ENCODE measurements at regions of chr4 and their contacts with region 1.

Region 1: GRCh38 chr4:47463235-47463956 is at the start of gene COMMD8:
- DNase-seq: peak; percentile 89 to 98 (median 96)
- ATAC-seq: peak; percentile 93 to 95 (median 94)
- H3K4me3 ChIP-seq: peak within 1 kb of the TSS; percentile 84 to 90
- H3K4me3 Mint-ChIP-seq: peak within 1 kb of the TSS; percentile 82 to 86 (median 84)
- H3K27ac ChIP-seq: peak within 1 kb of the TSS; percentile 83
- H3K27ac Mint-ChIP-seq: peak within 1 kb of the TSS; percentile 82 to 87
- H3K4me1 ChIP-seq: peaks cover 5 to 11% of the 10 kb centered on the region in 2 experiments
- H3K4me1 Mint-ChIP-seq: peaks cover 26 to 39% (median 39%) of the 10 kb centered on the region in 3 donors
- H3K27me3 ChIP-seq: no peaks in the 10 kb centered on the region
- H3K27me3 Mint-ChIP-seq: no peaks in the 10 kb centered on the region
- total RNA-seq, gene COMMD8: 8.2 to 17.0 (median 15.7) TPM

Region 2: GRCh38 chr4:47118192-47118929 is 345.0 kb before region 1 on chr4:
- CTCF ChIA-PET with region 1: no interaction called
- POLR2A ChIA-PET with region 1: no interaction called
- DNase-seq: no peak
- ATAC-seq: no peak
- H3K4me3 ChIP-seq: no peak overlapping the region
- H3K4me3 Mint-ChIP-seq: no peak overlapping the region
- H3K27ac ChIP-seq: no peak overlapping the region
- H3K27ac Mint-ChIP-seq: no peak overlapping the region
- H3K4me1 ChIP-seq: no peaks in the 10 kb centered on the region
- H3K4me1 Mint-ChIP-seq: peaks cover 0 to 2% (median 0%) of the 10 kb centered on the region in 3 donors
- H3K27me3 ChIP-seq: no peaks in the 10 kb centered on the region
- H3K27me3 Mint-ChIP-seq: peaks cover 4 to 5% of the 10 kb centered on the region in 2 donors

Region 3: GRCh38 chr4:47391256-47391655 is 72.1 kb before region 1 on chr4:
- CTCF ChIA-PET with region 1: no interaction called
- POLR2A ChIA-PET with region 1: no interaction called
- DNase-seq: no peak
- ATAC-seq: no peak
- H3K4me3 ChIP-seq: no peak overlapping the region
- H3K4me3 Mint-ChIP-seq: no peak overlapping the region
- H3K27ac ChIP-seq: no peak overlapping the region
- H3K27ac Mint-ChIP-seq: no peak overlapping the region
- H3K4me1 ChIP-seq: no peaks in the 10 kb centered on the region
- H3K4me1 Mint-ChIP-seq: no peaks in the 10 kb centered on the region
- H3K27me3 ChIP-seq: no peaks in the 10 kb centered on the region
- H3K27me3 Mint-ChIP-seq: peaks cover 1 to 11% of the 10 kb centered on the region in 2 donors

Region 4: GRCh38 chr4:47485047-47485692 is 21.8 kb after region 1 on chr4 and contains the start of gene ATP10D:
- CTCF ChIA-PET with region 1: interaction called in 1 of 2 experiments, 16 read pairs
- POLR2A ChIA-PET with region 1: interaction called in 1 of 2 experiments, 6 read pairs
- DNase-seq: peak; percentile 38 to 83 (median 64)
- ATAC-seq: peak; percentile 96 to 98 (median 96)
- H3K4me3 ChIP-seq: peak within 1 kb of the TSS; percentile 83 to 97
- H3K4me3 Mint-ChIP-seq: peak within 1 kb of the TSS; percentile 90 to 97 (median 95)
- H3K27ac ChIP-seq: peak within 1 kb of the TSS; percentile 71
- H3K27ac Mint-ChIP-seq: peak within 1 kb of the TSS; percentile 79 to 93
- H3K4me1 ChIP-seq: peaks cover 8 to 9% of the 10 kb centered on the region in 2 experiments
- H3K4me1 Mint-ChIP-seq: peaks cover 30 to 32% (median 30%) of the 10 kb centered on the region in 3 donors
- H3K27me3 ChIP-seq: no peaks in the 10 kb centered on the region
- H3K27me3 Mint-ChIP-seq: no peaks in the 10 kb centered on the region
- total RNA-seq, gene ATP10D: 2.3 to 8.0 (median 5.0) TPM